Natural killer cell (primary cell): ENCODE measurements at regions of chr3 and their contacts with region 1.

Region 1: GRCh38 chr3:122415720-122416654 is at the start of gene WDR5B:
- DNase-seq: peak; percentile 99 to 100
- ATAC-seq: peak; percentile 88 to 95 (median 92)
- H3K4me3 ChIP-seq: peak within 1 kb of the TSS; percentile 80
- H3K4me3 Mint-ChIP-seq: peak within 1 kb of the TSS; percentile 97
- H3K27ac ChIP-seq: peak within 1 kb of the TSS; percentile 92
- H3K27ac Mint-ChIP-seq: peak within 1 kb of the TSS; percentile 98
- H3K4me1 ChIP-seq: peaks cover 13% of the 10 kb centered on the region
- H3K4me1 Mint-ChIP-seq: peaks cover 37 to 51% of the 10 kb centered on the region in 2 donors
- H3K27me3 ChIP-seq: no peaks in the 10 kb centered on the region
- H3K27me3 Mint-ChIP-seq: no peaks in the 10 kb centered on the region
- CTCF ChIP-seq: no peak
- total RNA-seq, gene WDR5B: 5.1 to 9.4 (median 6.3) TPM

Region 2: GRCh38 chr3:122383771-122384697 is 32.0 kb before region 1 on chr3 and contains the start of gene FAM162A:
- intact Hi-C with region 1: loop called (anchors 1 kb)
- DNase-seq: peak; percentile 88 to 97
- ATAC-seq: peak; percentile 93 to 99 (median 95)
- H3K4me3 ChIP-seq: peak within 1 kb of the TSS; percentile 87
- H3K4me3 Mint-ChIP-seq: peak within 1 kb of the TSS; percentile 91
- H3K27ac ChIP-seq: peak within 1 kb of the TSS; percentile 74
- H3K27ac Mint-ChIP-seq: peak within 1 kb of the TSS; percentile 86 to 89
- H3K4me1 ChIP-seq: peaks cover 15% of the 10 kb centered on the region
- H3K4me1 Mint-ChIP-seq: peaks cover 23% of the 10 kb centered on the region in 2 donors
- H3K27me3 ChIP-seq: no peaks in the 10 kb centered on the region
- H3K27me3 Mint-ChIP-seq: no peaks in the 10 kb centered on the region
- CTCF ChIP-seq: peak; percentile 63
- total RNA-seq, gene FAM162A: 12.2 to 18.4 (median 16.3) TPM

Region 3: DNA sequence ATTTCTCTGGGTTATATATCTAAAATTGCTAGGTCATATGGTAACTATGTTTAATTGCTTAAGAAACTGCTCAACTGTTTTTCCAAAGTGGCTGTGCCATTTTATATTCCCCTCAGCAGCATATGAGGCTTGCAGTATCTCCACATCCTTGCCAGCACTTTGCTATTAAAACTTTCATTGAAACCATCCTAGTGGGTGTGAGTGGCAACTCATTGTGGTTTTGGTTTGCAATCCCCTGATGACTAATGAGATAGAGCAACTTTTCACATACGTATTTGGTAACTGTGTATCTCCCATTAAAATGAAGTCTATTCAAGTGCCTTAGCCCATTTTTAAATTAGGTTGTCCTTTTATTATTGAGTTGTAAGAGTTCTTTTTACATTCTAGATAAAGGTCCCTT is 81.4 kb after region 1 on chr3:
- intact Hi-C with region 1: loop called (anchors 5 kb)
- DNase-seq: peak; percentile 23 to 65
- ATAC-seq: peak; percentile 85 to 92 (median 88)
- H3K4me3 ChIP-seq: no peak overlapping the region
- H3K4me3 Mint-ChIP-seq: peak overlapping the region; percentile 30
- H3K27ac ChIP-seq: no peak overlapping the region
- H3K27ac Mint-ChIP-seq: peak overlapping the region; percentile 54 to 85
- H3K4me1 ChIP-seq: peaks cover 8% of the 10 kb centered on the region
- H3K4me1 Mint-ChIP-seq: peaks cover 48 to 51% of the 10 kb centered on the region in 2 donors
- H3K27me3 ChIP-seq: no peaks in the 10 kb centered on the region
- H3K27me3 Mint-ChIP-seq: no peaks in the 10 kb centered on the region
- CTCF ChIP-seq: no peak

Region 4: GRCh38 chr3:122514123-122515019 is 98.4 kb after region 1 on chr3 and contains the start of gene KPNA1:
- intact Hi-C with region 1: loop called (anchors 1 kb)
- DNase-seq: peak; percentile 86 to 95
- ATAC-seq: peak; percentile 83 to 95 (median 87)
- H3K4me3 ChIP-seq: peak within 1 kb of the TSS; percentile 70
- H3K4me3 Mint-ChIP-seq: peak within 1 kb of the TSS; percentile 91
- H3K27ac ChIP-seq: peak within 1 kb of the TSS; percentile 97
- H3K27ac Mint-ChIP-seq: peak within 1 kb of the TSS; percentile 87 to 90
- H3K4me1 ChIP-seq: peaks cover 14% of the 10 kb centered on the region
- H3K4me1 Mint-ChIP-seq: peaks cover 45 to 49% of the 10 kb centered on the region in 2 donors
- H3K27me3 ChIP-seq: no peaks in the 10 kb centered on the region
- H3K27me3 Mint-ChIP-seq: peaks cover 0 to 7% of the 10 kb centered on the region in 2 donors
- CTCF ChIP-seq: no peak
- total RNA-seq, gene KPNA1: 62.3 to 67.1 (median 63.1) TPM

Region 5: DNA sequence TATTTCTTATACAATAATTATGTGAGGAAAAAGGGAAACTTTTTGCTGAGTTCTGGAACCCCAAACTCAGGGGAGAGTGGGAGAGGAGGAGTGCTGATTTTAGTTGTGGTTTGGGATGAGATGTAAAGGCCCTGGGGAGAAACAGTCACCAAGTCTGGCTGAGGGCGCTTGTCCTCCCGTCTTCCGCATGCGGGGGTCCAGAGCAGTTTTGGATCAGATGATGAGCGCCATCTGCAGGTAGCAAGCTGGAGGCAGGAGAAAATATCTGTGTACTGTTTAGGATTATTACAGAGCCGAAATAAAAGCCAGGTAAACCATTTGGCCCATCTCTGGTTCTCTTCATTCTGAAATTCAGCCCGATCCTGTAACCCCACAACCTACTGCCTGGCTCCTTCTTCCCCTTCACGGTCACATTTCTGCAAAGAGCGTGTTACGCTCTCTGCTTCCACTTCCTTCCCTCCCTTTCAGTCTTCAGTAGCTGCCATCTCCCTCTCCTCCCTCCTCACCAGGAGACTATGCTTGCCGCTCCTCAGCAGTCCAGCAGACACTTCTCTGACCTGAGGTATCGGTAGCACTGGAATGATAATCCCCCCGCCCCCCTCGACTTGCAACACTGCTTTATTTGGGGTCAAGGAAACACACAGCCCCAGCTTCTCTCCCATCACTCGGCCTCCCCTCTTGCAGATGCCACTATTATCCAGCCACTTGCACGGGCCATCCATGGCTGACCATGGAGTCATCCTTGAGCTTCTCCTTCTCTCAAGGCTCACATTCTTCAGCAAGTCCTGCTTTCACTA is 263.3 kb after region 1 on chr3:
- intact Hi-C with region 1: loop called (anchors 1 kb)
- DNase-seq: peak; percentile 75 to 94
- ATAC-seq: peak; percentile 65 to 75 (median 65)
- H3K4me3 ChIP-seq: peak overlapping the region; percentile 98
- H3K4me3 Mint-ChIP-seq: peak overlapping the region; percentile 90
- H3K27ac ChIP-seq: peak overlapping the region; percentile 96
- H3K27ac Mint-ChIP-seq: peak overlapping the region; percentile 84 to 99
- H3K4me1 ChIP-seq: peaks cover 40% of the 10 kb centered on the region
- H3K4me1 Mint-ChIP-seq: peaks cover 50 to 52% of the 10 kb centered on the region in 2 donors
- H3K27me3 ChIP-seq: no peaks in the 10 kb centered on the region
- H3K27me3 Mint-ChIP-seq: no peaks in the 10 kb centered on the region
- CTCF ChIP-seq: peak; percentile 82

Region 6: GRCh38 chr3:122793568-122794416 is 377.8 kb after region 1 on chr3 and contains the start of gene HSPBAP1:
- intact Hi-C with region 1: loop called (anchors 5 kb)
- DNase-seq: peak; percentile 92 to 95
- ATAC-seq: peak; percentile 67 to 83 (median 78)
- H3K4me3 ChIP-seq: peak within 1 kb of the TSS; percentile 77
- H3K4me3 Mint-ChIP-seq: peak within 1 kb of the TSS; percentile 94
- H3K27ac ChIP-seq: peak within 1 kb of the TSS; percentile 96
- H3K27ac Mint-ChIP-seq: no peak within 1 kb of the TSS
- H3K4me1 ChIP-seq: peaks cover 21% of the 10 kb centered on the region
- H3K4me1 Mint-ChIP-seq: peaks cover 20 to 25% of the 10 kb centered on the region in 2 donors
- H3K27me3 ChIP-seq: no peaks in the 10 kb centered on the region
- H3K27me3 Mint-ChIP-seq: no peaks in the 10 kb centered on the region
- CTCF ChIP-seq: no peak
- total RNA-seq, gene HSPBAP1: 19.7 to 24.7 (median 23.4) TPM

Region 7: GRCh38 chr3:123584988-123585937 is 1169.3 kb after region 1 on chr3 and contains the start of gene HACD2:
- intact Hi-C with region 1: loop called (anchors 10 kb)
- DNase-seq: peak; percentile 95 to 96
- ATAC-seq: peak; percentile 92 to 99 (median 93)
- H3K4me3 ChIP-seq: peak within 1 kb of the TSS; percentile 83
- H3K4me3 Mint-ChIP-seq: peak within 1 kb of the TSS; percentile 87
- H3K27ac ChIP-seq: peak within 1 kb of the TSS; percentile 95
- H3K27ac Mint-ChIP-seq: peak within 1 kb of the TSS in 1 of 2 donors; percentile 71
- H3K4me1 ChIP-seq: peaks cover 13% of the 10 kb centered on the region
- H3K4me1 Mint-ChIP-seq: peaks cover 15 to 22% of the 10 kb centered on the region in 2 donors
- H3K27me3 ChIP-seq: no peaks in the 10 kb centered on the region
- H3K27me3 Mint-ChIP-seq: no peaks in the 10 kb centered on the region
- CTCF ChIP-seq: no peak
- total RNA-seq, gene HACD2: 16.1 to 34.1 (median 24.6) TPM